Heart right ventricle (tissue), 16 donors: ENCODE measurements at regions of chr9 and their contacts with region 1.

Region 1: GRCh38 chr9:113309204-113309813 is 6.1 kb upstream of the RNF183 start:
- DNase-seq: peak in 1 of 2 donors; percentile 34
- ATAC-seq: peak in 3 of 8 donors; percentile 69 to 76 (median 72)
- H3K4me3 ChIP-seq: no peak overlapping the region
- H3K27ac ChIP-seq: peak overlapping the region in 3 of 10 donors; percentile 71 to 77 (median 74)
- H3K4me1 ChIP-seq: peaks cover 0 to 28% (median 18%) of the 10 kb centered on the region in 9 donors
- H3K27me3 ChIP-seq: no peaks in the 10 kb centered on the region
- CTCF ChIP-seq: peak; percentile 41 to 80 (median 66)

Region 2: DNA sequence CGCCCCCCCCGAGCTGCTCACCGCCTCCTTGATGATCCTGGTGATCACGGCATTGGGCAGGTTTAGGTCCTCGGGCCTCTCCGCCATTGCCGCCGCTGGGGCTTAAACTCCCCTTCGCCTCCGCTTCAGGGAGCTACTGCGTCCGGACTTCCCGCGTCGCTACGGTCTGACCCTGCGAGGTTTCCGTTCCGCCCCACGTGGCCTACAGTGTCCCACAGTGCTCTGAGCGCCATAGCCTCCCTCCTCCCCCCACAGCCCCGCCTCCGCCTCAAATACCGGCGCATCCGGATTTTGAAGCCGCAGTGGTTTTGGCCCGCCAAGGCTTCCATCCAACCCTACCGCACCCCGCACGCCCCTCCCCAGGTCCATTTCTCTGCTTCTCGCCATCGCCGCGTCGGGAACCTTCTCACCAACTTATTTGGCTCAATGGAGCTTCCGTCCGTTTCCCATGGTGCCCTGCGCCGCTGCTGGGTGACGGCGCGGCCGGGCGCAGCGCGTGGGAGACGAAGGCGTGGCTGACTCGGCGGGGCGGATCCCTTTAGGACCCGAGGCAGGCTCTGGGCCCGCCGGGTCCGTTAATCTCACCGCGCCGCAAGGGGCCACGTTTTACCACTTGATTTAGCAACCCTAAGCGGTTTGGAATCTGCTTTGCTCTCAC is 101.0 kb after region 1 on chr9 and contains the starts of genes C9orf43 and POLE3:
- intact Hi-C with region 1: loop called in 6 of 10 experiments (anchors 1 to 10 kb)
- DNase-seq: peak; percentile 95
- ATAC-seq: peak; percentile 97 to 99 (median 98)
- H3K4me3 ChIP-seq: peak within 1 kb of the TSS; percentile 71 to 94 (median 80)
- H3K27ac ChIP-seq: peak within 1 kb of the TSS; percentile 88 to 98 (median 96)
- H3K4me1 ChIP-seq: peaks cover 2 to 31% (median 25%) of the 10 kb centered on the region in 9 donors
- H3K27me3 ChIP-seq: no peaks in the 10 kb centered on the region
- CTCF ChIP-seq: peak in 2 of 9 donors; percentile 18 to 25
- total RNA-seq, gene C9orf43: 0.17 to 1.1 (median 0.31) TPM in 8 of 10 donors, not detected in the others
- total RNA-seq, gene POLE3: 19.0 to 26.9 (median 23.1) TPM